GM18951 (cell line): ENCODE measurements at regions of chr9 and their contacts with region 1.

Region 1: GRCh38 chr9:127519301-127520166 is 68.2 kb downstream of the LRSAM1 start:
- POLR2A ChIP-seq: no peak

Region 2: DNA sequence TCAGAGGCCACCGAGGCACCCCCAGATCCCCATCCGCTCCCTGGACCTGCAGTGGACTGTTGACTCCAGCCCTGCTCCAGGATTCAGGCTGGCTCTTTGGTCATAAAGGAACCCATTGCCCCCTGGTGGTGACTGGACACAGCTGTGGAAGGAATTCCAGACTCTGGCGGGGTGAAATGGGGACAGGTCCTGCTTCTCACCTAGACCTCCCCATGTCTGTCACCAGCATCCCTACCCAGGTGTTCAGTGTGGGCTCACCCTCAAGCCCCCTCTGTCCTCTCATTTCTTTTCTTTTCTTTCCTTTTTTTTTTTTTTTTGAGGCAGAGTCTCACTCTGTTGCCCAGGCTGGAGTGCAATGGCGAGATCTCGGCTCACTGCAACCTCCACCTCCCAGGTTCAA is 67.0 kb after region 1 on chr9:
- in situ Hi-C with region 1: loop called (anchors 10 kb)
- POLR2A ChIP-seq: no peak

Region 3: DNA sequence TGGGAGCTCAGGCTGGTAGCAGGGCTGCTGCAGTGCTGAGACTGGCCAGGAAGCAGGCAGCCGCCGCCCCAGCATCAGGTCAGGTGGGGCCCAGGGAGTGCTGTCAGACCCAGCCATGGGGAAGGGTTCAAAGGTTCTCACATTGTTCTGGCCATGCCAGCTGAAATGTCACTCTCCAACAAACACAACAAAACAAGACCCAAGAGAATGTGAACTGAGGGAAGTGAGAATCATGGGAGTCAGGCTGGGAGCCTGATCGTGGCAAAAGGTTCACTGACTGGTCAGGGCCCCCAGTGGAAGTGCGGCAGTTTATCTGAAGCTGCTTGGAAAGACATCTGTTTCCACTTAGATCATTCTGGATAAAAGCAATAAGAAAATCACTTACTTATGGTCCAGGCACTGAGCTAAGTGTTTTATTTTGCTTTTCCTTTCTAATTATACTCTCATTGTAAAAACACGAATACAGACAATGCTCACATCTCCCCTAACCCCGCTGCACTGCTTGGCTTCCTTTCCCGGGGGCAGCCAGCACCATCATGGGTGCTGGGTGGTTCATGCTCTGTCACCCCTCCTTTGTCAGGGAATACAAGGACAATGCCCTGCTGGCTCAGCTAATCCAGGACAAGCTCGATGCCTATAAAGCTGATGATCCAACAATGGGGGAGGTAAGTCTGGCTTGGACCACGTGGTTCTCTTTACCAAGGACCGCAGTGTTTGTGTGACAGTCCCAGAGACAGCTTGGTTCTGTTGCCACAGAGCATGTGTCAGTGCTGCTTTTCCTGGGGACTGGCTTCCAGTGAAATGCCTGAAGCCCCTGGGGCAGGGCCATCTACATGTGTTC is 145.4 kb after region 1 on chr9:
- in situ Hi-C with region 1: no loop called
- POLR2A ChIP-seq: no peak